Activated CD4-positive, alpha-beta T cell treated with anti-CD3 and anti-CD28 coated beads, Interleukin-2, amount 10 ng/mL, durations not matched to agents 24 days and 14 days (primary cell): ENCODE measurements at regions of chr19 and their contacts with region 1.

Region 1: GRCh38 chr19:46788262-46788967 is at the start of gene SLC1A5:
- DNase-seq: peak; percentile 99
- H3K4me3 Mint-ChIP-seq: peak within 1 kb of the TSS; percentile 94
- H3K27ac Mint-ChIP-seq: peak within 1 kb of the TSS; percentile 93
- H3K4me1 Mint-ChIP-seq: peaks cover 54% of the 10 kb centered on the region
- H3K27me3 Mint-ChIP-seq: no peaks in the 10 kb centered on the region
- total RNA-seq, gene SLC1A5: 220 and 224 TPM in 2 replicates

Region 2: GRCh38 chr19:46586303-46587001 is 202.0 kb before region 1 on chr19:
- intact Hi-C with region 1: no loop called
- DNase-seq: no peak
- H3K4me3 Mint-ChIP-seq: no peak overlapping the region
- H3K27ac Mint-ChIP-seq: no peak overlapping the region
- H3K4me1 Mint-ChIP-seq: peaks cover 3% of the 10 kb centered on the region
- H3K27me3 Mint-ChIP-seq: peaks cover 34% of the 10 kb centered on the region

Region 3: DNA sequence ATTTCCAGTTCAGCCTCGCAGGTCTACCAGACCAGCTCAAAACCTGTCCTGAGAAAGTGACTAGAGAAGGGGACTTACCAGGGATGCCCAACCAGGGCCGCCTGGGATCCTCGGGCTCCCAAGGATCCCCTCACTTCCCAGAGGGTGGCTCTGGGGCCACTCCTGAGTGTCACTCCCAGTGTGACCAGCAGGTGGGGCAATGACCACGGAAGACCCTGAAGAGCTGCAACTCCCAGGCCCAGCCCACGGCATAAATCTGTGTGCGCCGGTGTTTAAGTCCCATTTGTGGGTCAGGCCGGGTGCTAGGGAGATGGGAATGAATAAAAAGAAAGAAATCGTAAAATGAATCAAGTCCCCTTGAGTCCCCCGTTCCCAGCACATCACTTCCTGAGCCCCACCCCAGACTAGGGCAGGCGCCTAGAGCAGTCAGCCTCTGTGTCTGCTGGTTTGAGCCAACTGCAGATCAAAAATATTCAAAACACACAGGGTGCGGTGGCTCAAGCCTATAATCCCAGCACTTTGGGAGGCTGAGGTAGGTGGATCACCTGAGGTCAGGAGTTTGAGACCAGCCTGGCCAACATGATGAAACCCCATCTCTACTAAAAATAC is 174.2 kb before region 1 on chr19:
- intact Hi-C with region 1: loop called (anchors 2 kb)
- DNase-seq: peak; percentile 95
- H3K4me3 Mint-ChIP-seq: peak overlapping the region; percentile 53
- H3K27ac Mint-ChIP-seq: peak overlapping the region; percentile 71
- H3K4me1 Mint-ChIP-seq: peaks cover 58% of the 10 kb centered on the region
- H3K27me3 Mint-ChIP-seq: no peaks in the 10 kb centered on the region

Region 4: DNA sequence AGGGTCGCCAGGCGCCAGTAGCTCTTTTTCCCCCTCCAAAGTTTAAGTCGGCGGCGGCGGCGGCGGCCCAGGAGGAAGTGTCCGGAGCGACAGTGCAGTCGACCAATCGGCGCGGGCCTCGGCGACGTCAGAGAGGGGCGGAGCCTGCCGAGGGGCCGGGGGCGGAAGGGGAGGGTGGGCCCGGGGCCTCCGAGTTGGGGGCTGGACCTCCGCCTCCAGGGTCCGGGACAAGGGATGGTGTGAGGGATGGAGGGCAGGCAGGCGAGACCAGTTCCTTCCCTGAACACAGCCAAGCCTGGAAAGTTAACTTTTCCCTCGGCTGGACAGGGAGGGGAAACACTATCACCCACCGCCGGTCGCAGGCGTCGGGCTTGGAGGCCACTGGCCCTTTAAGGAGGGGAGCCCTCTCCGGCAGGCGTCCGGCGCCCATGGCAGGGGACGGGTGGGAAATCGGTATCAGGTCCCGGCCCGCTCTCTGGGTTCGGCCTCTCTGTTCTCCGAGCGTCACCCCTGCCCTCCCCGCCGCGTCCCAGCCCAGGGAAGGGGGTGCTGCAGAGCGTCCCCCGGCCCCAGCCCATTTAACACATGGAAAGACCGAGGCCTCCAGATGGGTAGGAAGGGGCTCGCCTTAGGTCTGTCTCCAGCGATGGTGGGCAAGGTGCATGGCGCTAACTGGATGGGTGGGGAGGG is 71.2 kb before region 1 on chr19 and contains the start of gene PRKD2:
- intact Hi-C with region 1: loop called (anchors 2 kb)
- DNase-seq: peak; percentile 98
- H3K4me3 Mint-ChIP-seq: peak within 1 kb of the TSS; percentile 97
- H3K27ac Mint-ChIP-seq: peak within 1 kb of the TSS; percentile 94
- H3K4me1 Mint-ChIP-seq: peaks cover 51% of the 10 kb centered on the region
- H3K27me3 Mint-ChIP-seq: no peaks in the 10 kb centered on the region
- total RNA-seq, gene PRKD2: 89.1 and 90.5 TPM in 2 replicates

Region 5: DNA sequence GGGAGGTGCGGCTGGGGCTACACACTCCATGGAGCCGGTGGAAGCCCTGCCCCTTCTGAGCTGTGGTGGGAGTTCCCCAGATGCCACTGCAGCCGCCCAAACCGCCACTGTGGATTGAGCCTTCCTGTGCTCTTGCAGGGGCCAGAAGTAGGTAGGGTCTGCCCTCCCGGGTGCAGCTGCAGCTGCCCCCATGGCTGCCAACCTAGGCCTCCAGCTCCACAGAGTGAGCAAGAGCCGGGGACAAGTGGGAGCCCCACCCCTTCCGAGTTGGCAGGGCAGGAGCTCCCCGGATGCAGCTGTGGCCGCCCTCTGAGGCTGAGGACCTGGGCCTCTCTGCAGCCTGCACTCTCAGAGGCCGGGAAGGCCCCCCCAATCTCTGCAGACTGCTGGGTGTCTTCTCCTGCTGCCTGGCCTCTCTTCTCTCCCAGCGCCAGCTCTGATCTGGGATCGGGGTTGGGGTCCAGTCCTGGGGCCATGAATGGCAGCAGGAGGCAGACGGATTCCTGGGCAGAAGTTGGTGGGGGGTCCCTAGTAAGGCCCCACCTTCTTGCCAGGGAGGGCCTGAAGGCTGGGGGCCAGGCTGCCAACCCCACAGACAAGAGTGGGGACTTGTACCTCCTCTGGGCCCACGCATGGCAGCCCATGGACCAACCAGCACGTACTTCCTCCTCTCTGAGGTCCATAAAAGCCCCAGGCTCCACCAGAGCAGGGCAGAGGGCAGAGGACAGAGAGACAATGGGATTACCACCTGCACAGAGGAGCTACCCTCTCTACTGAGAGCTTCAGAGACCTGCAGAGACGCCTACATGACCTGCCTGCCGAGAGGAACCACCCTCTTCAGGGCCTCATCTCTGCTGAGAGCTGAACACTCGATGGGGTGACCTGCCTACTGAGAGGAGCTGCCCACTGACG is 33.3 kb after region 1 on chr19:
- intact Hi-C with region 1: loop called (anchors 2 kb)
- DNase-seq: peak; percentile 88
- H3K4me3 Mint-ChIP-seq: peak overlapping the region; percentile 50
- H3K27ac Mint-ChIP-seq: peak overlapping the region; percentile 77
- H3K4me1 Mint-ChIP-seq: peaks cover 38% of the 10 kb centered on the region
- H3K27me3 Mint-ChIP-seq: no peaks in the 10 kb centered on the region

Region 6: DNA sequence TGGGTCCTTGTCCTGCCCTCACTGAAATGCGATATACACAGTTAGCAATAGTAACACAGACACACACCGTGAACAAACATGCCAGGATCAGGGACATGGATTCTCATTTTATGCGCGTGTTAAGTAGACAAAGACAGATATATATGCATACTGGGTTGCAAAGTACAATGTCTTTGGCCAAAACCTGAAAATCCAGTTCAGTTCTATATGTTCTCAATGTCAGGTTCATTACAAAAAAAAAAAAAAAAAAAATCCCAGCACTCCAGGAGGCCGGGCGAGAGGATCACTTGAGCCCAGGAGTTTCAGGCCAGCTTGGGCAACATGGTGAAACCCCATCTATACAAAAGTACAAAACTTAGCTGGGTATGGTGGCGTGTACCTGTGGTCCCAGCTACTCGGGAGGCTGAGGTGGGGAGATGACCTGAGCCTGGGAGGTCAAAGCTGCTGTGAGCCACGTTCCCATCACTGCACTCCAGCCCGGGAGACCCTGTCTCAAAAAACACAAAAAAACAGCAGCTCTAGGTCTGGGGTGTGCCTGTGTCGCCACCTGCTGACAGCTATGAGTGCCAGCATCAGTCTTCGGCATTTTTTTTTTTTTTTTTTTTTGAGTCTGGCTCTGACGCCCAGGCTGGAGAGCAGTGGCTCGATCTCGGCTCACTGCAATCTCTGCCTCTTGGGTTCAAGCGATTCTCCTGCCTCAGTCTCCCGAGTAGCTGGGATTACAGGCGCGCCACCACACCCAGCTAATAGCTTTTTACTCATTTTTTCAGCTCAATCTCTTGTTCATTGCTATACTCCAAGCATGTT is 51.9 kb after region 1 on chr19:
- intact Hi-C with region 1: loop called (anchors 1 kb)
- DNase-seq: peak; percentile 84
- H3K4me3 Mint-ChIP-seq: no peak overlapping the region
- H3K27ac Mint-ChIP-seq: no peak overlapping the region
- H3K4me1 Mint-ChIP-seq: peaks cover 3% of the 10 kb centered on the region
- H3K27me3 Mint-ChIP-seq: no peaks in the 10 kb centered on the region

Region 7: GRCh38 chr19:46954993-46955812 is 166.8 kb after region 1 on chr19:
- intact Hi-C with region 1: loop called (anchors 10 kb)
- DNase-seq: peak; percentile 84
- H3K4me3 Mint-ChIP-seq: peak overlapping the region; percentile 81
- H3K27ac Mint-ChIP-seq: peak overlapping the region; percentile 94
- H3K4me1 Mint-ChIP-seq: peaks cover 67% of the 10 kb centered on the region
- H3K27me3 Mint-ChIP-seq: no peaks in the 10 kb centered on the region

Region 8: DNA sequence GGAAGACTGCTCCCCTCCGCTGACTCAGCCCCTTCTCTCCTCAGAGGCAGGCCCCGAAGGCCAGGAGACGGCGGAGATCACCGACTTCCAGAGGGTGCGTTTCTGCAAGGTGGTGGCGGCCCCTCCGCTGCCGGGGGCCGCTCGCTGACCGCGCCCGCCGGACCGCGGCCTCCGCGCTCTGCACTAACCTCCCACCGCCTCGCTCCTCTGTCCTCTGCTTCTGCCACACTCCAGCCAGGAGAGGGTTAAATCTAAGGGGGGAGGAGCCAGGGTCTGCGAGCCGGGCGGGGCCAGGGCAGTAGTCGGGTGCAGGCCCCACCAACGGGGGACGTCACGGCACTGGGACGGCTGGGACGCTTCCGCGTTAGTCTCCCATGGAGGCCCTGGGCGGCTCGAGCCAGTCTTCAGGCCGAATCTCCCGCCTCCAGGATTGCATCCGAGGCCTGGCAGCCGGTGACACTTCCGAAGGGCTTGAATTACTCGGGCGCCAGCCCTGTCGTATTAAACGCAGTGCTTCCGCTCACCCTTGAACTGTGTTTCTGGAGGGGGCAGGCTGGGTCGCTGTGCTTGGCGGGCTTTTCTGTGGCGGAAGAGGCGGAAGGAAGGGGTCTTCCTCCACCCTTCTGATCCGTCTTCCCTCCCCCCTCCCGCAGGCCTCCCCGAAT is 485.0 kb after region 1 on chr19:
- intact Hi-C with region 1: loop called (anchors 10 kb)
- DNase-seq: peak; percentile 98
- H3K4me3 Mint-ChIP-seq: peak overlapping the region; percentile 97
- H3K27ac Mint-ChIP-seq: peak overlapping the region; percentile 99
- H3K4me1 Mint-ChIP-seq: peaks cover 41% of the 10 kb centered on the region
- H3K27me3 Mint-ChIP-seq: no peaks in the 10 kb centered on the region